ENCODE measurements at regions of chr16 and their contacts with region 1.

Region 1: DNA sequence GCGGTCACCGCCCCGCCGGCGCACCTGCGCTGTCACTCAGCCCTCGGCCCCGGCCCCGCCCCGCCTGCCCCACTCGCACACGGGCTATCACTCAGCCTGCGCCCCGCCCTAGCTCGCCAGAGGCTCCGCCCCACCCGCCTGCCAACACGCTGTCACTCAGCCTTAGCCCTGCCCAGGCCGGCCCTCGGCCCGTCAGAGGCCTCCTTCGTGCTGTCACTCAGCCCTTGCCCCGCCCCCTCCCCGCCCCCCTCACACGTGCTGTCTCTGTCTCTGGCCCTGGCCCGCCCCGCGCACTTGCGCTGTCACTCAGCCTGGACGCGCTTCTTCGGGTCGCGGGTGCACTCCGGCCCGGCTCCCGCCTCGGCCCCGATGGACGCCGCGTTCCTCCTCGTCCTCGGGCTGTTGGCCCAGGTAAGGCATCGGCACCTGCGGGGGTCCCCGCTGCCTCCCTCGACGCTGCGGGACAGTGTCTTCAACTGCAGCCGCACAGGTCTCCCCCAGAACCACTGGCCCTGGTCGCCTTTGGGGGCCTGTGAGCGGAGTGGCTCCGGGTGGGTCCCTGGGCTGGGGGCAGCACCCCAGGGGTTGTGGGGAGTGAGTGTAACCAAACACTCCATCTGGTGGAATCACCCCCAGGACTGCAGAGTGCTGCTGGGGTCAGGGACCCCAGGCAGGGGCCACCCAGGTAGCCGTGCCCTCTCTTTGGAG is at the start of gene CDH15:
- DNase-seq: peak; percentile 86
- H3K4me3 Mint-ChIP-seq: peak within 1 kb of the TSS; percentile 71
- H3K27ac Mint-ChIP-seq: peak within 1 kb of the TSS; percentile 55
- H3K4me1 Mint-ChIP-seq: peaks cover 6% of the 10 kb centered on the region
- H3K27me3 Mint-ChIP-seq: no peaks in the 10 kb centered on the region
- total RNA-seq, gene CDH15: not detected in 2 replicates

Region 2: DNA sequence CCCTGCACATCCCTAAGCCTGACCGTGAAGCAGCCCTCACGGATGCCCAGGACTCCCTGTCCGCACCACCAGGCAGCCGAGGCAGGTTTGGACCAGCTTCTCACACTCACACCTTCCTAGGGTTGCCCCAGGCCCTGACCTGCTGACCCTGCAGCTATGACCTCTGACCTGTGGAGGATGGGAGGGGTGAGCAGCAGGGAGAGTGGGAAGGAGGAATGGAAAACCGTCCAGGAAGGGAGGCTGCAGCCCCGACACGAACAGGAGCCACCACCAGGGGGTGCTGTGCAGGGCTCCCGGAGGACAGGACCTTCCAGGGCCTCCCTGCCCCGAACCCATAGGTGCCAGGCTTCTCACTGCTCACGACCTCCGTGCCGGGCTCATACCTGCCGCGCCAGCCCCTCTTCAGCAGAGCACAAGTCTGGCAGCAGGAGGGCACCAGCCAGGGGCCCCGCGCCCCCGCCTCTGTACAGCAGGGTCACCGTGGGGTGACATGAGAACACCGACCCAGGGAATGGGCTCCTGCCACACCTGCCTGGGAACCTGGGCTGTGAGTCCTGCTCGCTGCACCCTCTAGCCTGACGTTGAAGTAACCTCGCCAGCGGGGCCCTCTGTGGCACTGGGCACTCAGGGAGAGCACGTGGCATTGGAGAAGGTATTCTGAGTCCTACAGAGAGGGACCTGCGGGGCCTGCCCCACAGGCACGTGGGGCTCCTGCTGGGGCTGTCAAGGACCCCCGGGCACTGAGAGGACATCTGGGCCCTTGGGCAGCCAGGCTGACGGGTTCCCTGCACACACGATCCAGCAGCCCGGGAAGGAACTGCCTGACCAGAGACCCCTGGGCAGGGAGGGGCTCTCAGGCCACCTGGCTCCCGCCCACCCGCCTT is 427.7 kb before region 1 on chr16:
- intact Hi-C with region 1: loop called (anchors 2 kb)
- DNase-seq: peak; percentile 47
- H3K4me3 Mint-ChIP-seq: no peak overlapping the region
- H3K27ac Mint-ChIP-seq: no peak overlapping the region
- H3K4me1 Mint-ChIP-seq: peaks cover 10% of the 10 kb centered on the region
- H3K27me3 Mint-ChIP-seq: no peaks in the 10 kb centered on the region

Region 3: DNA sequence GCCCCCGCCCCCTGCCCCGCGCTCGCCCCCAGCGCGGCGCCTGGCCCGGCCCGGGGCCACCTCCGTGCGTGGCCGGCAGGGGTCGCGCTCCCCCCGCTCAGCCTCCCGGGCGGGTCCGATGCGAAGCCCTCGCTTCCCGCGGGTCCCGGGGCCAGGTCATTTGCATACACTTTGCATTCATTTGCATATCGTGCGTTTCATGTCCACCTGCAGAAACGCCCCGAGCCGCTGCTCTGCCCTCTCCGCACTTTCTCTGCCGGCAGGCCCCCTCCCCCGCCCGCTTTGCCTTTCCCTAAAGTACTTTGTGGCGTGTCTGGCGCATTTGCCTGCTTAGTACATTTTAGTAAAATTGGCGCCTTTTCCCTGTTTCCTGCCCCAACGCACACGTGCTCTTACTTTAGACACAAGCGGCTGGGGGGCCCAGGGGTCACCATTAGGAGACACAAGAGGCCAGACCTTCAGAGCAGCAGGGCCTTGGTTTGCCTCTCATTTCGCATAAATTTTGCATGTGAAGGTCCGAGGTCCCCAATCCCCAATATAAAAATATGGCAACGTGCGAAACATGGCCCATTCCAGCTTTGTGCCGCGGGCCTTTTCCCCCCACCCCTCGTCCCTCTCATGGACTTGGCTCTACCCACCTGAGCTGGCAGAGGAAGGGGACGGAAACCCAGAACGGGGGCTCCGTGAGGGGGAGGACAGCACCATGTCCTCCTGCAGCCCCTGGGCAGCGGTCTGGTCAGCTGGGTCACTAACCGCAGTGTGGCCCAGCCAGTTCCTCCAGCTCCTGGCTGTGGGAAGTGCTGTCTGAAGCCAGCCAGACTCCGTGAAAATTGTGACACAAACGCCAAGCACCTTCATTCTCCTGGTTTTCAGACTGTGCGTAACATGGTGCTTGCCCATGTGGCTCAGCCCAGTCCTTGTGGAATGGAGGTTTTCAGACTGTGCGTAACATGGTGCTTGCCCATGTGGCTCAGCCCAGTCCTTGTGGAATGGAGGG is 229.4 kb before region 1 on chr16:
- intact Hi-C with region 1: loop called (anchors 1 kb)
- DNase-seq: peak; percentile 36
- H3K4me3 Mint-ChIP-seq: peak overlapping the region; percentile 26
- H3K27ac Mint-ChIP-seq: no peak overlapping the region
- H3K4me1 Mint-ChIP-seq: no peaks in the 10 kb centered on the region
- H3K27me3 Mint-ChIP-seq: peaks cover 31% of the 10 kb centered on the region

Region 4: DNA sequence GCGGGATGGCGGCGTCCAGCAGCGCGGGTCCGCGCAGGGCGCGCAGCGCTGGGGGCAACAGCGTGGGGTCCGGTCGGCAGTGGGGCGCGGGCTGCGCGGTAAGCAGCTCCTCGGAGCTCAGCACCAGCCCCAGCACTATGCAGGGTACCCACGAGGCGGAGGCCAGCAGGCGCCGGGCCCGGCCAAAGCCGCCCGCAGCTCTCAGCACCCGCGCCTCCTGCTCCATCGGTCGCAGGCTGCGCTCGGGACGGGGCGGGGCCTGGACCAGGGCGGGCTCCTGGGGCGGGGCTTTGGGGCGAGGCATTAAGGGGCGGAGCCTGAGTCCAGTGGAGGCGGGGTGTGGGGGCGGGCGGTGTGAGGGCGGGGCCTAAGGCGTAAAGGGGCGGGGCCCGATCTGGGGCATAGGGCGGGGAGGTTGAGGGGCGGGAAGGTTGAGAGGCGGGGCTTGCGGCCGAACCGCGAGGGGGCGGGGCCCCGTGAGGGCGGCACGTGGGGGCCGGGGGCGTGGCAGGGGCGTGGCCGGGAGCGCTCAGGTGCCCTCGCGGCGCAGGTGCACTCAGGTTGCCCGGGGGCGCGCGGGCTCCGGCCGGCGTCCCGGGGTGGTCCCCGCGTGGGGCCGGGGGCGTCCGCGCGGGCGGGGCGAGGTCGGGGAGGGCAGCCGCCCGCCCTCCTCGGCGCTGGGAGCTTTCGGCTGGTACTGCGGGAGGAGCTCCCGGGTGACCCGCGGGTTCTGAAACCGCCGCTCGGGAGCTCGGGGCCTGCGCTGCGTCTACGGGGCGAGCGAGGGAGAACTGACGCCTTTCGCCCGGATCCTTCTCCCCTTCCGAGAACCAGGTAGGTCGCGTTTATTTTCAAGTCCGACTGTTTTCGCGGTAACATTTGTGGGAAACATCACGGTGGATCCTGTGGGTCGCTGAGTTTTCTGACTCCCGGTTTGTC is 30.1 kb after region 1 on chr16:
- intact Hi-C with region 1: loop called (anchors 1 kb)
- DNase-seq: peak; percentile 74
- H3K4me3 Mint-ChIP-seq: peak overlapping the region; percentile 59
- H3K27ac Mint-ChIP-seq: no peak overlapping the region
- H3K4me1 Mint-ChIP-seq: no peaks in the 10 kb centered on the region
- H3K27me3 Mint-ChIP-seq: peaks cover 40% of the 10 kb centered on the region